GM12878 (cell line): ENCODE measurements at regions of chr1 and their contacts with region 1.

Region 1: GRCh38 chr1:112950426-112950825 is 5.6 kb downstream of the SLC16A1 start:
- DNase-seq: no peak
- ATAC-seq: peak; percentile 8; the same call in 1 of the 3 replicates
- H3K4me3 ChIP-seq: no peak overlapping the region
- H3K27ac ChIP-seq: no peak overlapping the region
- H3K4me1 ChIP-seq: peaks cover 4% of the 10 kb centered on the region; the same call in 1 of the 2 replicates
- H3K27me3 ChIP-seq: no peaks in the 10 kb centered on the region
- CTCF ChIP-seq: no peak
- EP300 ChIP-seq: no peak
- POLR2A ChIP-seq: no peak
- RAD21 ChIP-seq: no peak

Region 2: DNA sequence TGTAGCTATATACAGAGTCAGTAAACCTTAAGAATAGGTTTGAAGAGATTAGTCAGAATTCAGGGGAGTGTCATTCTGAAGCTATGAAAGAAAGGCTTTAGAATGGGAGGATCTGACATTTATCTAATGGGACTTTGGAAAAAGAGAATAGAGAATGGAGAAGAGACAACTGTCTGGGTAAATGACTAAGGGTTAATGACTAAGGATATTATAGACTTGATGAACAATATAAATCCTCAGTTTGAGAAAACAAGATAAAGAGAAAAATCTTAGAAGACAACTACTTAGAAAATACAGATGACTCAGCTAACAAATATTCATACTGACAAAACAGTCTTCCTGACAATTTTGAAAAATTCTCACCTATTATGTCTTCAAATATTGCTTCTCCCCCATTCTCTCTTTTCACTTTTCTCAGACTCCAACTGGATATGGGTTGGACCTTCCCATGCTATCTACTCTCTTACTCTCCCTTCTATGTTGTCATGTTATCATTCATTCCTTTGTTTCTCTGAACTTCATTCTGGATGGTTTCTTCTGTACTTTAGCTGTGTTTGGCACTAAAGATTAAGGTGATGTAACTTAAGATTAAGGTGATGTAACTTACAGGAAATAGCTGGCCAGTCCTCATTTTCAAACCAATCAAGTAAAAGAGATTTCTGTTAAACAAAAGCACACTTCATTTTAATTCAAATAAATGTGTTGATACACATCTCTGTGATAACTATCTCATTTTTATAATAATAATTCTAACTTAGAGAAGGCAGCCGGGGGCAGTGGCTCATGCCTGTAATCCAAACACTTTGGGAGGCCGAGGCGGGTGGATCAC is 14.8 kb before region 1 on chr1:
- CTCF ChIA-PET with region 1: interaction called, 46 read pairs
- POLR2A ChIA-PET with region 1: interaction called, 25 read pairs
- RAD21 ChIA-PET with region 1: interaction called, 53 read pairs
- SMC1A ChIA-PET with region 1: interaction called, 80 read pairs
- in situ Hi-C with region 1: no loop called
- intact Hi-C with region 1: no loop called
- DNase-seq: no peak
- ATAC-seq: no peak
- H3K4me3 ChIP-seq: no peak overlapping the region
- H3K27ac ChIP-seq: no peak overlapping the region
- H3K4me1 ChIP-seq: 0 out of 2 replicates have a peak, but pooled peaks cover 4% of the 10 kb centered on the region
- H3K27me3 ChIP-seq: no peaks in the 10 kb centered on the region
- CTCF ChIP-seq: no peak
- EP300 ChIP-seq: no peak
- POLR2A ChIP-seq: no peak
- RAD21 ChIP-seq: no peak